ENCODE measurements at regions of chr5 and their contacts with region 1.

Region 1: GRCh38 chr5:19370644-19371386 is 617.2 kb downstream of the CDH18 start:
- DNase-seq: no peak
- ATAC-seq: no peak
- H3K4me3 ChIP-seq: no peak overlapping the region
- H3K27ac ChIP-seq: no peak overlapping the region
- H3K4me1 ChIP-seq: no peaks in the 10 kb centered on the region
- H3K27me3 ChIP-seq: no peaks in the 10 kb centered on the region
- CTCF ChIP-seq: no peak
- POLR2A ChIP-seq: no peak
- RAD21 ChIP-seq: no peak

Region 2: GRCh38 chr5:18975624-18976023 is 395.2 kb before region 1 on chr5:
- CTCF ChIA-PET with region 1: no interaction called
- POLR2A ChIA-PET with region 1: no interaction called
- dilution Hi-C with region 1: no loop called
- in situ Hi-C with region 1: no loop called
- intact Hi-C with region 1: no loop called
- DNase-seq: no peak
- ATAC-seq: no peak
- H3K4me3 ChIP-seq: no peak overlapping the region
- H3K27ac ChIP-seq: no peak overlapping the region
- H3K4me1 ChIP-seq: no peaks in the 10 kb centered on the region
- H3K27me3 ChIP-seq: no peaks in the 10 kb centered on the region
- CTCF ChIP-seq: no peak
- POLR2A ChIP-seq: no peak
- RAD21 ChIP-seq: no peak

Region 3: DNA sequence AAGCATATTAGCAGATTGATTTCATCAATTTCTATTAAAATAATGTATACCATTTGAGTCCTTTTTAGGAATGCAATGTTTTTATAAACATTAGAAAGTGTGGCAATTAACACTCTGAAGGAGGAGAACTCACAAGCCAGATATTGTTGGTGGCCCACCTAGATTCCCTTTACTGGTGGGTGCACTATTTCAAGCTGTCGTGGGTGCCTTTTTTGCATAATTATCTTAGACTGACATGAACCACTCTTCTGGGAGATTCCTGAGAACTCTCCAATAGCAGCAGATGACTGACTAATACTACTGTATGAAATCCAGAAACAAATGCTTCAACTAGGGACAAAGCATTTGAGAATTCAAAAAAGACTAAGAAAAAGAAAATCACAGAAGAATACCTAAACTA is 91.2 kb after region 1 on chr5:
- CTCF ChIA-PET with region 1: no interaction called
- POLR2A ChIA-PET with region 1: no interaction called
- dilution Hi-C with region 1: no loop called
- in situ Hi-C with region 1: no loop called
- intact Hi-C with region 1: no loop called
- DNase-seq: no peak
- ATAC-seq: no peak
- H3K4me3 ChIP-seq: no peak overlapping the region
- H3K27ac ChIP-seq: no peak overlapping the region
- H3K4me1 ChIP-seq: no peaks in the 10 kb centered on the region
- H3K27me3 ChIP-seq: no peaks in the 10 kb centered on the region
- CTCF ChIP-seq: no peak
- POLR2A ChIP-seq: no peak
- RAD21 ChIP-seq: no peak

Region 4: GRCh38 chr5:19564036-19564435 is 193.2 kb after region 1 on chr5:
- CTCF ChIA-PET with region 1: no interaction called
- POLR2A ChIA-PET with region 1: no interaction called
- dilution Hi-C with region 1: no loop called
- in situ Hi-C with region 1: no loop called
- intact Hi-C with region 1: no loop called
- DNase-seq: no peak
- ATAC-seq: no peak
- H3K4me3 ChIP-seq: no peak overlapping the region
- H3K27ac ChIP-seq: no peak overlapping the region
- H3K4me1 ChIP-seq: no peaks in the 10 kb centered on the region
- H3K27me3 ChIP-seq: no peaks in the 10 kb centered on the region
- CTCF ChIP-seq: no peak
- POLR2A ChIP-seq: no peak
- RAD21 ChIP-seq: no peak

Region 5: DNA sequence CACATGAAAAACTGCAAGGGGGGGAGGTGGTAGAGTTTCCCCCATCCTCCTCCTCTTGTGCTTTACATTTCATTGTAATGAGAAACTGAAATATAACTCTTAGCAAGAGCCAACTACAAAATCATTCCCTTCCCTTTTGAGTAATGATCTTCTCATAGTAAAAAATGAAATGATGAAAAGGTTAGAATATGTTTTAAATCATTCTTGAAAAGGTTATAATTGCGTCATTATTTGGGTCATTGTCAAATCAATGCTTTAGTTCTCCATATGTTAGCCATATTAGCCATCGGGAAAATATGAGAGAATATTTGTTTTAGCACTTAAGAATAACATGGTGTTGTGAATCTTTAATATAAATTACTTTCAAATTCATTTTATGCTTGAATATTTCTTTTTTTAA is 1802.2 kb after region 1 on chr5:
- CTCF ChIA-PET with region 1: no interaction called
- POLR2A ChIA-PET with region 1: no interaction called
- dilution Hi-C with region 1: no loop called
- in situ Hi-C with region 1: no loop called
- intact Hi-C with region 1: loop called (anchors 5 kb)
- DNase-seq: no peak
- ATAC-seq: no peak
- H3K4me3 ChIP-seq: no peak overlapping the region
- H3K27ac ChIP-seq: no peak overlapping the region
- H3K4me1 ChIP-seq: no peaks in the 10 kb centered on the region
- H3K27me3 ChIP-seq: no peaks in the 10 kb centered on the region
- CTCF ChIP-seq: no peak
- POLR2A ChIP-seq: no peak
- RAD21 ChIP-seq: no peak